Gastrocnemius medialis (tissue), 4 donors: ENCODE measurements at regions of chr10 and their contacts with region 1.

Region 1: GRCh38 chr10:72834183-72834825 is 59.2 kb upstream of the OIT3 start:
- DNase-seq: peak; percentile 32 to 37
- ATAC-seq: peak; percentile 68 to 82
- H3K4me3 ChIP-seq: no peak overlapping the region
- H3K27ac ChIP-seq: no peak overlapping the region
- H3K4me1 ChIP-seq: peaks cover 40 to 44% of the 10 kb centered on the region in 2 donors
- H3K27me3 ChIP-seq: no peaks in the 10 kb centered on the region
- CTCF ChIP-seq: peak; percentile 62 to 69 (median 64)
- POLR2A ChIP-seq: no peak

Region 2: GRCh38 chr10:72364239-72364777 is 470.0 kb before region 1 on chr10:
- in situ Hi-C with region 1: loop called (anchors 5 to 10 kb)
- intact Hi-C with region 1: loop called (anchors 2 kb)
- DNase-seq: peak; percentile 66 to 81
- ATAC-seq: peak; percentile 90 to 98
- H3K4me3 ChIP-seq: peak overlapping the region in 2 of 4 donors; percentile 22 to 39
- H3K27ac ChIP-seq: peak overlapping the region in 3 of 4 donors; percentile 13 to 62 (median 34)
- H3K4me1 ChIP-seq: peaks cover 5 to 9% of the 10 kb centered on the region in 2 donors
- H3K27me3 ChIP-seq: no peaks in the 10 kb centered on the region
- CTCF ChIP-seq: peak; percentile 85 to 93 (median 90)
- POLR2A ChIP-seq: no peak

Region 3: GRCh38 chr10:72625608-72626443 is 208.5 kb before region 1 on chr10 and contains the start of gene MICU1:
- in situ Hi-C with region 1: no loop called
- intact Hi-C with region 1: loop called (anchors 10 kb)
- DNase-seq: peak; percentile 96
- ATAC-seq: peak; percentile 98 to 99
- H3K4me3 ChIP-seq: peak within 1 kb of the TSS; percentile 67 to 97 (median 92)
- H3K27ac ChIP-seq: peak within 1 kb of the TSS; percentile 85 to 93 (median 91)
- H3K4me1 ChIP-seq: peaks cover 17 to 18% of the 10 kb centered on the region in 2 donors
- H3K27me3 ChIP-seq: no peaks in the 10 kb centered on the region
- CTCF ChIP-seq: peak in 1 of 5 experiments; percentile 9
- POLR2A ChIP-seq: peak; percentile 83 to 86
- total RNA-seq, gene MICU1: 42.7 to 62.2 (median 51.9) TPM

Region 4: DNA sequence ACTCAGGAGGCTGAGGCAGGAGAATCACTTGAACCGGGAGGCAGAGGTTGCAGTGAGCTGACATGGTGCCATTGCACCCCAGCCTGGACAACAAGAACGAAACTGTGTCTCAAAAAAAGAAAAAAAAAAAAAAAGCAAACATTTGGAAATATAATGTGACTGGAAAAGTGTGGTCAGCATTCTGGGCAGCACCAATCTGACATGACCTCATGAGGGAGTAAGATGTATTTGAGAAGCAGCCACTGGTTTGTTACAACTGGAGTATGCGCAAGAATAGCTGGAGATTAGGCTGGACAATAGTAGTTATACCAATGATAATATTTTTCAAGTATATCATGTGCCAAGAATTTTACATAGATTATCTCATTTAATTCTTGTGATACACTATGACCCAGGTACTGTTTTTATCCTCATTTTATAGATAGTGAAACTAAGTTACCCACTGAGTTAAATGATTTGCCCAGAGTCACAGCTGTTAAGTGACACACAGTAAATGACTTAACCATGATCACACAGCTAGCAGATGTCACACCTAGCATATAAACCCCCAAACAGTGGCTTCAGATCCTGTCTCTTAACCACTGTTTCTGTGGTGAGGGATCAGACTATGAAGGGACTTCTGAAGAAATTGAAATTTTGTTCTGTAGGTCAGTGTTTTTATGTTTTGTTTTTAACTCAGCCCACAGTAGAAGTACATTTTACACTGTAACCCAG is 131.3 kb before region 1 on chr10:
- in situ Hi-C with region 1: loop called (anchors 5 to 10 kb)
- intact Hi-C with region 1: no loop called
- DNase-seq: no peak
- ATAC-seq: no peak
- H3K4me3 ChIP-seq: no peak overlapping the region
- H3K27ac ChIP-seq: peak overlapping the region; percentile 8 to 28 (median 23)
- H3K4me1 ChIP-seq: peaks cover 23 to 24% of the 10 kb centered on the region in 2 donors
- H3K27me3 ChIP-seq: no peaks in the 10 kb centered on the region
- CTCF ChIP-seq: no peak
- POLR2A ChIP-seq: no peak

Region 5: DNA sequence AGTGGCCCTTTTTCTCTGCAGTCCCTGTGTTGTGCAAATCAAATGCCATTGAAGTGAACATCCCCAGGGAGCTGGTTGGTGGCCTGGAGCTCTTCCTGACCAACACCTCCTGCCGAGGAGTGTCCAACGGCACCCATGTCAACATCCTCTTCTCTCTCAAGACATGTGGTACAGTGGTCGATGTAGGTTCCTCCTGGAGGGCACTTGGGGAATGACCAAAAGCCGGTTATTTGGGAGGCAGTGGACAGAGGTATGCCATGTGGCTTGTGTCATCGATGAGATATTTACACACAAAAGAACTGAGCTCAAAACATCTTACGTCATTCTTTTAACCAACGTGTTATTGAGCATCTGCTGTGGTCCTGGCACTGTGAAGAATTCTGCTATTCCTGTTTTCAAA is 79.0 kb after region 1 on chr10:
- in situ Hi-C with region 1: no loop called
- intact Hi-C with region 1: no loop called
- DNase-seq: no peak
- ATAC-seq: no peak
- H3K4me3 ChIP-seq: no peak overlapping the region
- H3K27ac ChIP-seq: no peak overlapping the region
- H3K4me1 ChIP-seq: no peaks in the 10 kb centered on the region
- H3K27me3 ChIP-seq: no peaks in the 10 kb centered on the region
- CTCF ChIP-seq: no peak
- POLR2A ChIP-seq: no peak